ENCODE measurements at regions of chr14 and their contacts with region 1.

Region 1: GRCh38 chr14:20530771-20531571 is 25.6 kb downstream of the RNASE10 start:
- DNase-seq: peak; percentile 69
- ATAC-seq: peak; percentile 84
- H3K4me3 ChIP-seq: no peak overlapping the region
- H3K27ac ChIP-seq: no peak overlapping the region
- H3K4me1 ChIP-seq: no peaks in the 10 kb centered on the region
- H3K27me3 ChIP-seq: peaks cover 1% of the 10 kb centered on the region
- CTCF ChIP-seq: peak; percentile 70
- POLR2A ChIP-seq: no peak
- RAD21 ChIP-seq: peak; percentile 52

Region 2: GRCh38 chr14:20469242-20469889 is 61.6 kb before region 1 on chr14 and contains the start of gene PNP:
- CTCF ChIA-PET with region 1: no interaction called
- POLR2A ChIA-PET with region 1: no interaction called
- dilution Hi-C with region 1: no loop called
- in situ Hi-C with region 1: no loop called
- intact Hi-C with region 1: loop called (anchors 5 kb)
- DNase-seq: peak; percentile 85
- ATAC-seq: peak; percentile 98
- H3K4me3 ChIP-seq: peak within 1 kb of the TSS; percentile 88
- H3K27ac ChIP-seq: peak within 1 kb of the TSS; percentile 58; the same call in 1 of the 2 replicates
- H3K4me1 ChIP-seq: peaks cover 4% of the 10 kb centered on the region; the same call in 1 of the 2 replicates
- H3K27me3 ChIP-seq: no peaks in the 10 kb centered on the region
- CTCF ChIP-seq: no peak
- POLR2A ChIP-seq: peak; percentile 98
- RAD21 ChIP-seq: no peak
- total RNA-seq, gene PNP: 60.3 and 68.8 TPM in 2 replicates

Region 3: DNA sequence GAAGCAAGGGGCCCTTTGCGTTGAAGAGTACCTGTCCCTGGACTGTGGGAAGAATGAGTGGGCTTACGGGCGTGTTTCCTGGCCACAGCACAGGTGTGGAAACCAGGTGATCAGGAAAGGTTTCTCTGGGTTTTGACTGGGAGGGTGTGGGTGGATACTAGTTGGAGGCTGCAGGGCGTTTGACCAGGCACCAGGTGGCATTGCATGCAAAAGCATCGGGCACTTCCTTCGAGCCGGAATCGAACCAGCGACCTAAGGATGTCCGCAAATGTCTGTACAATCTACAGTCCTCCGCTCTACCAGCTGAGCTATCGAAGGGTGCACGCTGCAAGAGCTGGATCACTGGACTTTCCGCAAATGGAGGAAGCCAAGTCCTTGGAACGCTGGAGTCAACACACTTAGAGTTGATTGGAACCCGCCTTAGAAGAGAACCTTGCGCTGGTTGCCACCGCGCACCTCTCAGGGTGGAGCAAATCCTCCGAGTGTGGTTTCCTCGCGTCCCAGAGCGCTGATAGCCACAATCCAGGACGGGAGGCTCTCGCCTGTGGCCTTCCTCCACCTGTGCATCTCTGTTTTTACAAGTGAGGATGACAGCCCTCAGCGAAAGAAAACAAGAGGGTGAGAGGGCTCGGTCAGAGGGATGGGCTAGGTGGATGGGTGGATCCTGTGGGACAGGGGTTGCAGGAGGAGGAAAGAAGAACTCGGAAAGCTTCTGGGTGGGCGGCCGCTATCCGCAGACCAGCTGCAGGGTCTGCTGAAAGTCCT is 132.2 kb after region 1 on chr14:
- CTCF ChIA-PET with region 1: no interaction called
- POLR2A ChIA-PET with region 1: no interaction called
- dilution Hi-C with region 1: loop called (anchors 25 kb)
- in situ Hi-C with region 1: no loop called
- intact Hi-C with region 1: no loop called
- DNase-seq: peak; percentile 55
- ATAC-seq: peak; percentile 82
- H3K4me3 ChIP-seq: no peak overlapping the region; the same call in 1 of the 2 replicates
- H3K27ac ChIP-seq: no peak overlapping the region
- H3K4me1 ChIP-seq: no peaks in the 10 kb centered on the region
- H3K27me3 ChIP-seq: peaks cover 10% of the 10 kb centered on the region; the same call in 1 of the 2 replicates
- CTCF ChIP-seq: peak; percentile 35; the same call in 1 of the 2 replicates
- POLR2A ChIP-seq: no peak
- RAD21 ChIP-seq: peak; percentile 39

Region 4: DNA sequence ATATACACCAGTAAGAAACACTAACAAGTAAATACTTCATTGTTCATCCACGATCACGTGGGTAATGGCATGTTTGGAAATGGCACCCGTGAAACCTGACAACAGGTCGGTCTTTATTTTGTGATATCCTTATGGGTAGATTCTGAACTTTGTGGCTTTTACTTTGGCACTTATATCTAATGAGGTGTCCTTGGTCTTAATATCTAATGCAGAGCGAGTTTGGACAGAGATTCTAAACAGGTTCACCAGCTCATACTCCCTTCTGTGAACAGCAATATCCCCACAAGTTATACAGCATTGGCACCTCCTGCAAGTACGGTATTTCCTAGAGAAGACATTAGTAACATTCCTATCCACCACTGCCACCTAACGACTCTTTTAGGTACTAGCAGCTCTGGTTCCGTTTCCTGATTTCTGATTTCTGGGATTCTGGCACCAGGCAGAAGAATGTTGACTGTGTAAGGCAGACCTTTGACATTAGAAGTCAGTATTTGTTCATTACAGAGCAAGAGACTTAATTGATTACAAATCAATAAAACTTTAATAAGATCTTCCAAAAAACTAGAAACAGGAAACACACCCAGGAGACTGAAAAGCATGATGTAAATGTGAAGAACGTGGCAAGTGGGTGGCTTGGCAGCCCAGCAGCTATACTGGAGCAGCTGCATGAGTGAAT is 160.0 kb after region 1 on chr14:
- CTCF ChIA-PET with region 1: no interaction called
- POLR2A ChIA-PET with region 1: no interaction called
- dilution Hi-C with region 1: no loop called
- in situ Hi-C with region 1: no loop called
- intact Hi-C with region 1: loop called (anchors 1 kb)
- DNase-seq: peak; percentile 72
- ATAC-seq: peak; percentile 99
- H3K4me3 ChIP-seq: no peak overlapping the region; the same call in 1 of the 2 replicates
- H3K27ac ChIP-seq: no peak overlapping the region
- H3K4me1 ChIP-seq: no peaks in the 10 kb centered on the region
- H3K27me3 ChIP-seq: no peaks in the 10 kb centered on the region
- CTCF ChIP-seq: peak; percentile 88
- POLR2A ChIP-seq: no peak
- RAD21 ChIP-seq: peak; percentile 82